ENCODE measurements at regions of chr10 and their contacts with region 1.

Region 1: GRCh38 chr10:71569775-71570588 is 149.6 kb downstream of the C10orf105 start:
- DNase-seq: peak; percentile 86
- H3K4me3 ChIP-seq: peak overlapping the region in 1 of 2 experiments; percentile 44; a peak in 1 of 4 replicates
- H3K27ac ChIP-seq: no peak overlapping the region
- H3K4me1 ChIP-seq: no peaks in the 10 kb centered on the region; a peak in 1 of 4 replicates
- H3K27me3 ChIP-seq: peaks cover 3% of the 10 kb centered on the region
- CTCF ChIP-seq: peak; percentile 84
- EP300 ChIP-seq: no peak
- RAD21 ChIP-seq: peak; percentile 80

Region 2: GRCh38 chr10:71383972-71384687 is 185.9 kb before region 1 on chr10:
- CTCF ChIA-PET with region 1: interaction called, 223 read pairs
- POLR2A ChIA-PET with region 1: no interaction called
- DNase-seq: peak; percentile 84
- H3K4me3 ChIP-seq: no peak overlapping the region; a peak in 1 of 4 replicates
- H3K27ac ChIP-seq: no peak overlapping the region
- H3K4me1 ChIP-seq: no peaks in the 10 kb centered on the region
- H3K27me3 ChIP-seq: peaks cover 30% of the 10 kb centered on the region; the same call in 1 of the 2 replicates
- CTCF ChIP-seq: peak; percentile 89
- EP300 ChIP-seq: no peak
- RAD21 ChIP-seq: peak; percentile 80

Region 3: DNA sequence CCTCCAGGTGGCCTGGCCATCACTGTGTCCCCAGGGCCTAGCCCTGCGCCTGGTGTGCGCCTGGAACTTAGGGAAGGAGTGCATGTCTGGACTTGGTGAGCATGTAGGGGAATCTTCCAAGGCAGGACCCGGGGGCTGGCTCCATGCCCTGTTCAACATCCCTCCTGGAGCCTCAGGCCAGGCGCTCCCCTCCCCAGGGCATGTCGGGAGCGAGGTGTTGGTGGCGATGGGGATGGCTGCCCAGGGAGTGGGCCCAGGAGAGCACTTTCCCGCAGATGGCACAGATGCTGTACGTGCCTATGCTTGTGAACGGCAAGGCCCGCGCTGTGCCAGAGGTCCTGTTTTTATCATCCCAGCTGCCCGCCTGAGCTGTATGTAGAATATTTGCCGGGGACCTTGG is 118.2 kb before region 1 on chr10:
- CTCF ChIA-PET with region 1: interaction called, 10 read pairs
- POLR2A ChIA-PET with region 1: no interaction called
- DNase-seq: no peak
- H3K4me3 ChIP-seq: no peak overlapping the region
- H3K27ac ChIP-seq: no peak overlapping the region
- H3K4me1 ChIP-seq: peaks cover 0 to 5% of the 10 kb centered on the region in 2 experiments; a peak in 1 of 4 replicates
- H3K27me3 ChIP-seq: peaks cover 10% of the 10 kb centered on the region; the same call in 1 of the 2 replicates
- CTCF ChIP-seq: no peak
- EP300 ChIP-seq: no peak
- RAD21 ChIP-seq: no peak

Region 4: GRCh38 chr10:71517298-71518169 is 52.4 kb before region 1 on chr10:
- CTCF ChIA-PET with region 1: interaction called, 38 read pairs
- POLR2A ChIA-PET with region 1: no interaction called
- DNase-seq: peak; percentile 55
- H3K4me3 ChIP-seq: no peak overlapping the region
- H3K27ac ChIP-seq: no peak overlapping the region; a peak in 1 of 4 replicates
- H3K4me1 ChIP-seq: peaks cover 0 to 43% of the 10 kb centered on the region in 2 experiments; a peak in 1 of 4 replicates
- H3K27me3 ChIP-seq: peaks cover 4% of the 10 kb centered on the region
- CTCF ChIP-seq: no peak
- EP300 ChIP-seq: no peak
- RAD21 ChIP-seq: peak; percentile 18; the same call in 1 of the 2 replicates

Region 5: DNA sequence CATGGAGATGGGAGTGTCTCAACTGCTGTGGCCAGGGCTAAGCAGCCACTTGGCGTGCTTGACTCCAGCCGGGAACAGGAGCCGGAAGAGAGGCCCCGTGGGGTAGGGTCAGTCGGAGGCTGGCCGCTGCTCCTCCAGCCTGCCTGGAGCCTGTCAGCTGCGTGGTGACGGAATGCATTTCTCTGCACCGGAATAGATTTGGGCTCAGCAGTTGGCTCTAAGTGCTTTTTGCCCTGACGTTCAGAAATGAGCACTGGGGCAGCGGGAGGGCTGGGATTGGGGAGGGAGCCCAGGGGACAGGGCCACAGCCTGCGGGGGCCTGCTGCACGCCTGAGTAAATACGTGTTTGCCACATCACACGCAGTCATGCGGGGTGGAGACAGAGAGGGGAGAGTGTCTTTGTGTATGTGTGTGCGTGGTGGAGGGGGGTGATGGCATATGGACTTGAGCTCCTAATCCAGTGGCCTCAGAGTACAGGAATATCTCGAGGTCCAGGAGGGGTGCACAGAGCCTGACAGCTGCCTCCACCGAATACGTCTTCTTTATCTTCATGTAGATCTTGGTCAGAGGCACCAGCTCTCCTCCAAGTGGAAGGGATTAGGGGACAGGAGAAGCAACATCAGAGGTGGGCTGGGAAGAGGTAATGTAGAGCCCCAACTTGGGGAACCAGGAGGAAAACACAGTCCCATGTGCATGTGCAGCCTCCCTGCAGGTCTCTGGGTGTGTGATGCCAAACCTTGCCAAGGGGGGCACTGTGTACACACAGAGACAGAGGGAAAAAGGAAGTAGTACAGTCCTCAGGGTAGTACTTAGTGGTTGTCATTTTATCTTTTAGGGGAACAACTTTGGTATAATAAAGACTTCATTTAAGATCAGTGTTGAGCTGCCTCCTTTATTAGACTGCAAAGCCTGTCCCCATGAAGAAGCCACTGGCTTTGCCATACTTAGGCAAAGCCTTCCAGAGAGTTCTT is 21.8 kb before region 1 on chr10:
- CTCF ChIA-PET with region 1: interaction called, 28 read pairs
- POLR2A ChIA-PET with region 1: no interaction called
- DNase-seq: no peak
- H3K4me3 ChIP-seq: no peak overlapping the region
- H3K27ac ChIP-seq: no peak overlapping the region
- H3K4me1 ChIP-seq: peaks cover 0 to 28% of the 10 kb centered on the region in 2 experiments; a peak in 1 of 4 replicates
- H3K27me3 ChIP-seq: peaks cover 28% of the 10 kb centered on the region
- CTCF ChIP-seq: peak; percentile 41
- EP300 ChIP-seq: no peak
- RAD21 ChIP-seq: no peak

Region 6: DNA sequence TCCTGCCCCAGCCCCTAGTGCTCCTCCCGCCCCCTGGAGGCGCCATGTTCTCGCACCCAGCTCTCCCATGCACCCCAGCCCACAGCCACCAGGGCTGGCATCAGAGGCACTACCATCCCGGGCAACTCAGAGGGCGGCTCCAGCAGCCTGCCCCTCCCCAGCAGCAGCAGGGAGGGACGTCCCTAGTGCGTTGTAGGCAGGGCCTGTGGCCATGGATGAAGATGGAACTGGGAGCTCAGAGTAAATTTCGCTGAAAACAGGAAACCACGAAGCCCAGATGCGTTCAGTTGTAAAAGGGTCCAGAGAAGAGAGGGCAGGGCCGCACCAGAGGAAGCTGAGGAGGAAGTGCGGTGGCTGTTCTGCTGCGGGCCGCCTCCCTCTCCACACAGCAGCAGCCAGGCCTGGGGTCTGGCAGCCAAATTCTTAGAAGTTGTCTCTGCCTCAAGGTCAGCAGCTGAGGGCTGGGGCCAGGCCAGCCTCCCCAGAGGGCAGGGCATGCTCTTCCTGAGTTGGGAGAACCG is 178.7 kb after region 1 on chr10:
- CTCF ChIA-PET with region 1: no interaction called
- POLR2A ChIA-PET with region 1: no interaction called
- DNase-seq: peak; percentile 55
- H3K4me3 ChIP-seq: no peak overlapping the region
- H3K27ac ChIP-seq: no peak overlapping the region
- H3K4me1 ChIP-seq: peaks cover 0 to 33% of the 10 kb centered on the region in 2 experiments; a peak in 1 of 4 replicates
- H3K27me3 ChIP-seq: no peaks in the 10 kb centered on the region
- CTCF ChIP-seq: no peak
- EP300 ChIP-seq: no peak
- RAD21 ChIP-seq: no peak